Psoas muscle (tissue), 8 donors: ENCODE measurements at regions of chrX and their contacts with region 1.

Region 1: GRCh38 chrX:120560842-120561633 is at the start of gene CUL4B:
- DNase-seq: peak; percentile 91 to 96
- ATAC-seq: peak; percentile 94 to 96 (median 95)
- H3K4me3 ChIP-seq: peak within 1 kb of the TSS; percentile 68
- H3K27ac ChIP-seq: peak within 1 kb of the TSS; percentile 94
- H3K4me1 ChIP-seq: peaks cover 15% of the 10 kb centered on the region
- H3K27me3 ChIP-seq: no peaks in the 10 kb centered on the region
- CTCF ChIP-seq: no peak
- total RNA-seq, gene CUL4B: 9.8 to 11.7 (median 11.2) TPM

Region 2: DNA sequence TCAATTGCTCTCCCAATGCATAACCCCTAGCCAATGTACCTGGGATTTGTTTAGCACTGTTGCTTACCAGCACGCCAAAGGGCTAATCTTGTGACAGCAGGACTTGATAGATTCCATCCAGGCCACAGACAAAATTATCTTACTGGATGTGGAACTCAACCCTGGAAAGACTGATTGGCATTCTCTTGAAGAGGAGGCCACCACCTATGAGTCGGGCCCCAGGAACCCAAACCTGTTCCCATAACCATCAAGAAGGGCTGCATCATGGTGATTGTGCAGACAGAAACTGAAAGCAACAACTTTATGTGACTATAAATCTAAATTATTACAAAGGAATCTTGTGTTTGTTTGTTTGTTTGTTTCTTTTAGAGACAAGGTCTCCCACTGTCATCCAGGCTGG is 229.9 kb before region 1 on chrX:
- intact Hi-C with region 1: no loop called
- DNase-seq: no peak
- ATAC-seq: no peak
- H3K4me3 ChIP-seq: no peak overlapping the region
- H3K27ac ChIP-seq: no peak overlapping the region
- H3K4me1 ChIP-seq: no peaks in the 10 kb centered on the region
- H3K27me3 ChIP-seq: no peaks in the 10 kb centered on the region
- CTCF ChIP-seq: no peak

Region 3: DNA sequence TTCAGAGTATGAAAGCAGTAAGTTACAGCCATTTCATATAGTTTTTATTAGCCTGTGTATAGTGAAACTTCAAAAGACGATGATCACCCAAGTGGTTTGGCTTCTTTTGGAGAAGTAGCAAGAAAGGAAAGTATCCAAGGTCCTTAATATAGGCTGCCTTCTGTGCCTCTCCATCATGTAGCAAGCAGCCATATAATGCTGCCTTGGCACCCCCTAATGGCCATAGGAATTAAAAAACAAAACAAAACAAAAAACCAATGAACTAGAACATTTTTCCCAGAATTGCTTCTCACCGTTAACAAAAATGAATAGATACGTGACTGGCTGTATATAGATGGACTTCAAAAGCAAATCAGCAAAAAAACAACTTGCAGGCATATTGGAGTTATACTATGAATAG is 110.9 kb before region 1 on chrX:
- intact Hi-C with region 1: no loop called
- DNase-seq: no peak
- ATAC-seq: peak in 3 of 4 donors; percentile 52 to 68 (median 66)
- H3K4me3 ChIP-seq: no peak overlapping the region
- H3K27ac ChIP-seq: no peak overlapping the region
- H3K4me1 ChIP-seq: no peaks in the 10 kb centered on the region
- H3K27me3 ChIP-seq: no peaks in the 10 kb centered on the region
- CTCF ChIP-seq: no peak

Region 4: DNA sequence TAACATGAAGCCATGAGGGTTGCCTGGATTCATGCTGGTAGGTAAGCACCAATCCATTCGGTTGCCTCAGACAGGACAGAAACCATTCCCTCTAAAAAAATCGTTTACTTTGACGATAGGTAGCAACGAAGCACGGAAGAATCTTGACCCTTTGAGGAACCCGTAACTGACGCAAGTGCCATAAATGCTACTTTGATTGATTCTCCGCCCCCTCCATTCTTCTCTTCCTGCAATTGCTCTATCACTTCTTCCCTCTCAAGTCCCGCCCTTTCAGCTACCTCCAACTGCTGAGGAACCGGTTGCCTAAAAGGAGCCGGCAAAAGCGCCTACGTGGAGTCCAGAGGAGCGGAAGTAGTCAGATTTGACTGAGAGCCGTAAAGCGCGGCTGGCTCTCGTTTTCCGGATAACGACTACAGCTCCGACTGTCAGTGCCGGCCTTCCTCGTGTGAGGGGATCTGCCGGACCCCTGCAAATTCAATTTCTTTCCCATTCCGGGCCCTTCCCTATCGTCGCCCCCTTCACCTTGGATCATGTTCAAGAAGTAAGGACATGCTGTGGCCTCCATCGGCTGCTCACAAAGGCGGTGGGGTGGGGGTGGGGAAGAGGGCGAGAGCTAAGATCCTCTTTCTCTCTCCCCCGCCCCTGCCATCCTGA is 42.8 kb after region 1 on chrX and contains the start of gene MCTS1:
- intact Hi-C with region 1: loop called (anchors 1 to 2 kb)
- DNase-seq: peak; percentile 77 to 89
- ATAC-seq: peak; percentile 89 to 97 (median 96)
- H3K4me3 ChIP-seq: peak within 1 kb of the TSS; percentile 70
- H3K27ac ChIP-seq: peak within 1 kb of the TSS; percentile 86
- H3K4me1 ChIP-seq: no peaks in the 10 kb centered on the region
- H3K27me3 ChIP-seq: no peaks in the 10 kb centered on the region
- CTCF ChIP-seq: no peak
- total RNA-seq, gene MCTS1: 23.0 to 34.6 (median 27.7) TPM

Region 5: DNA sequence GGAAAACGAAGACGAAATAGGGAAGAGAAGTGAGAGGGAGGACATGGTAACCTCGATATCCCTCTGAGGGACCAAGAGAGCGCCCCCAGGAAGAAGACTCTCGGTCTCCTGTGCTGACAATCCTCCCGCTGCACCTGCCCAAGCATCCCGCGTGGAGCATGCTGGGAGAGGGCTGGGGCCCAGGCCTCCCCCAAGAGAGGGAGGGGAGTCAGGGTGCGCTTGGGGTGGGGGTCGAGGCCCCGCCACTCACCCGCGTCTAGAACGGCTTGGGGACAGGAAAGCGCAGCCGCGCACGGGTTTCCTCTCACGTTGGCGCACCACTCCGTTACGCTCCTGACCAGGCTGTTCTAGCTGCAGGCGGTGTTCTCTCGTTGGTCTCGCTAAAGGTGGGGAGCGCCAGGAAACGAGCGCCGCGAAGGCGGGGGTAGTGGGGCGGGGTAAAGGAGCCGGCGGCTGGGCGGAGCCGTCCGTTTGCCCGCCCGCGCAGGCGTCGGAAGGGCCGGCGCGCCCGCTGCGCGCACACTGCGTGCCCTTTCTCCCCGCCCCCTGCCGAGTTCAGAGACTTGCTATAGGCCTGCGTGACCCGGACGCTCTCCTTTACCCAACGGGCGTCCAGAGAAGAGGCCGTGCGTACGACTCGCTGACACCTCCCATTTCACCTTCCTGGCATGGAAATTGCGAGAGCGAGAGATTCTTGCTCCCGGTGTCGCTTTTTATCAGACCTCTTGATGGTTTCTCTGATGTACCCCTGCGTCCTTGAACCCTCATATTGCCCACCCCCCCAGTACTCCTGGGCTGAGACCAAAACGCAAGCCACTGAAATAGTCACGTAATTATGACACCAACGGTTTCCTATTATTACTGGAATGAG is 68.9 kb after region 1 on chrX and contains the start of gene C1GALT1C1:
- intact Hi-C with region 1: loop called in 1 of 2 experiments (anchors 2 kb)
- DNase-seq: peak; percentile 91 to 96
- ATAC-seq: peak; percentile 98 to 99 (median 98)
- H3K4me3 ChIP-seq: peak within 1 kb of the TSS; percentile 74
- H3K27ac ChIP-seq: peak within 1 kb of the TSS; percentile 84
- H3K4me1 ChIP-seq: no peaks in the 10 kb centered on the region
- H3K27me3 ChIP-seq: no peaks in the 10 kb centered on the region
- CTCF ChIP-seq: no peak
- total RNA-seq, gene C1GALT1C1: 5.0 to 6.3 (median 5.7) TPM

Region 6: DNA sequence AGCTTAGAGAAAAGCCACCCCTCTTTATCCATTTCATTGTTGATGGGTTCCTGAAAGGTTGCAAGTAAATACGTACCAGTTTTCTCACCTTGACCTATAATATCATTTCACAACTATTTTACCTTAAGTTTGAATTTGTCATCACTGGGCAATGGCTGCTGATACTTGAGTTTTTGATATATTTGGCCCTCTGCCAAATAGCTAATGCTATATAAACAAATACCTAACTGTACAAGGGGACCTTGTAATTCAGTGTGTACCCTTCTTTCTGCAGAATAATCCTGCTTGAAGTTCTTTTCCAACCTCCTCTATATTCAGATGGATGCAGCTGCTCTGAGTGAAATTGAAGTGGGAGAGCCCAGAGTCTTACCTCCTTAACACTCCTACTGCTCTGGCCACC is 467.4 kb after region 1 on chrX:
- intact Hi-C with region 1: no loop called
- DNase-seq: no peak
- ATAC-seq: no peak
- H3K4me3 ChIP-seq: no peak overlapping the region
- H3K27ac ChIP-seq: no peak overlapping the region
- H3K4me1 ChIP-seq: no peaks in the 10 kb centered on the region
- H3K27me3 ChIP-seq: no peaks in the 10 kb centered on the region
- CTCF ChIP-seq: no peak